Left cardiac atrium (tissue), 4 donors: ENCODE measurements at regions of chr2 and their contacts with region 1.

Region 1: DNA sequence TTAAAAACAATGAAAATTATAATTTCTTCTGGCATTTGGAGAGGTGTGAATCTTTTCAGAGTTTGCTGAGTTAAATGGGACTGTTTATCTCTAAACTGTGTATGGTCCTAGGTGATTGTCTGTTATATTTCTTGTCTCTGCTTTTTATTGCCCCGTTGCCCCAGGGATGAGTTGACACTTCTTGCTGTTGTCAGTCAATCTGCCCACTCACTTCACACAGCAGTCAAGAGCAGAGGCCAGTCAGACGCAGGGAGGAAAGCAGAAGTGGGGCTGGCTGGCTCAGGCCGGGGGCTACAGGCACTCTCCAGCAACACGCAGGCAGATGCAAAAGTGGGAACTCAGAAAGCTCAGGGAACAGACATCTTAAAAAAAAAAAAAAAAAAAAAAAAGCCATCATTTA is 365.2 kb downstream of the CLIP4 start:
- DNase-seq: peak; percentile 34
- ATAC-seq: peak; percentile 43 to 61

Region 2: GRCh38 chr2:29561181-29561580 is 80.8 kb after region 1 on chr2:
- intact Hi-C with region 1: no loop called
- DNase-seq: no peak
- ATAC-seq: no peak

Region 3: DNA sequence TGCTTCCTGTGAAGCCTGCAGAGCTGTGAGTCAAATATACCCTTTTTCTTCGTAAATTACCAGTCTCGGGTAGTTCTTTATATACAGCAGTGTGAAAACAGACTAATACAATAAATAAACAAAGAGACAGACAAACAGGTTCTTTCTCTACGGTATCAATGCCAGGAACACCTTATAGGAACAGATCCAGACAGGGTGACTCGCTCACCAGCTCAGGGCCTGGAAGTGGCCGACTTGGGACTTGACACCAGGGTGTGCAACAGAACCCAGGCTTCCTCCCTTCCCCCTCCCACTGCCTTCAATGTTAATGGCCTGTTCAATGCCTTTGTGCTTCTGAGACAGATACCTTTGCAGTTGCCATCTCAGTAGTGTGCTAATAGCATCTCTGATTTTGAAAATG is 131.4 kb after region 1 on chr2:
- intact Hi-C with region 1: loop called in 1 of 2 experiments (anchors 10 kb)
- DNase-seq: no peak
- ATAC-seq: no peak